T-cell (primary cell): ENCODE measurements at regions of chr6 and their contacts with region 1.

Region 1: GRCh38 chr6:133973109-133973971 is 20.3 kb downstream of the TBPL1 start:
- DNase-seq: peak in 1 of 35 experiments; percentile 73
- ATAC-seq: peak; percentile 42 to 66 (median 55)
- H3K4me3 ChIP-seq: no peak overlapping the region
- H3K4me3 Mint-ChIP-seq: no peak overlapping the region
- H3K27ac ChIP-seq: no peak overlapping the region
- H3K27ac Mint-ChIP-seq: peak overlapping the region in 1 of 2 donors; percentile 52
- H3K4me1 ChIP-seq: peaks cover 2 to 5% of the 10 kb centered on the region in 2 experiments
- H3K4me1 Mint-ChIP-seq: peaks cover 50 to 64% (median 58%) of the 10 kb centered on the region in 3 donors
- H3K27me3 ChIP-seq: no peaks in the 10 kb centered on the region
- H3K27me3 Mint-ChIP-seq: no peaks in the 10 kb centered on the region

Region 2: DNA sequence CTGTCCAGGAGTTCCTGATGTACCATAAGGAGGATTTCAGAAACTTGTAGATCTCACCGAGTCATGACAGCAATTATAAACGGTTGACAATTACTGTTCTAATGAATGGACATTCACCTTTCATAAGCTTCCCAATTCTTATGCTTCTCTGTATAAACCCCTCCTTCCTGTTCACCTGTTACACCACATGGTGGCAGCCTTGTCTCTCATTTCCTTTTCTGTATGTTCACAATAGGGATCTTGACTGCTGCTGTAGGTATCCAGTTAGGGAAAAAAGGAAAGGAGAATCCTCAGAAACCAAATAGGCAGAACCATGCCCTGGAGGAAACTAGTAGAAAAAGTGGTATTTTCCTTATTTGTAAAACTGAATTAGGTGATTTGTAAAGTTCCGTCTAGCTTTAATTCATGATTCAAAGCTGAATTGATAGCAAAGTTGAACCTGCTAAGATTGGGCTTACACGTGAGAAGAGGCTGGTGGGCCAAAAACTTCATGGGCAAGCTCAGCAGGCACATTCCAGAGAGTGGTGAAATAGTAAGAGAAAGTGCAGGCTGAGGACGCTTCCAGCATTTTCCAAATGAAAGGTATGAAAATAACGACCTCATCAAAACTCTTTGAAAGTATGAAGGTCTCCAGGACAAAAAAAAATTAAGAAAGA is 49.3 kb before region 1 on chr6:
- CTCF ChIA-PET with region 1: interaction called, 8 to 16 read pairs
- POLR2A ChIA-PET with region 1: no interaction called
- DNase-seq: peak in 33 of 35 experiments; percentile 8 to 82 (median 42)
- ATAC-seq: peak; percentile 80 to 89 (median 86)
- H3K4me3 ChIP-seq: no peak overlapping the region
- H3K4me3 Mint-ChIP-seq: no peak overlapping the region
- H3K27ac ChIP-seq: no peak overlapping the region
- H3K27ac Mint-ChIP-seq: no peak overlapping the region
- H3K4me1 ChIP-seq: no peaks in the 10 kb centered on the region
- H3K4me1 Mint-ChIP-seq: no peaks in the 10 kb centered on the region
- H3K27me3 ChIP-seq: peaks cover 6 to 19% of the 10 kb centered on the region in 2 experiments
- H3K27me3 Mint-ChIP-seq: peaks cover 20 to 40% of the 10 kb centered on the region in 2 donors

Region 3: GRCh38 chr6:133959667-133960368 is 13.5 kb before region 1 on chr6:
- CTCF ChIA-PET with region 1: interaction called, 12 to 25 read pairs
- POLR2A ChIA-PET with region 1: interaction called in 1 of 2 experiments, 3 read pairs
- DNase-seq: no peak
- ATAC-seq: no peak
- H3K4me3 ChIP-seq: no peak overlapping the region
- H3K4me3 Mint-ChIP-seq: peak overlapping the region in 1 of 3 donors; percentile 14
- H3K27ac ChIP-seq: no peak overlapping the region
- H3K27ac Mint-ChIP-seq: peak overlapping the region in 1 of 2 donors; percentile 0
- H3K4me1 ChIP-seq: peaks cover 7 to 15% of the 10 kb centered on the region in 2 experiments
- H3K4me1 Mint-ChIP-seq: peaks cover 80 to 84% (median 82%) of the 10 kb centered on the region in 3 donors
- H3K27me3 ChIP-seq: no peaks in the 10 kb centered on the region
- H3K27me3 Mint-ChIP-seq: no peaks in the 10 kb centered on the region

Region 4: GRCh38 chr6:134063966-134064445 is 90.7 kb after region 1 on chr6:
- CTCF ChIA-PET with region 1: interaction called, 27 to 43 read pairs
- POLR2A ChIA-PET with region 1: interaction called in 1 of 2 experiments, 3 read pairs
- DNase-seq: peak in 34 of 35 experiments; percentile 10 to 74 (median 42)
- ATAC-seq: peak; percentile 88 to 90 (median 90)
- H3K4me3 ChIP-seq: no peak overlapping the region
- H3K4me3 Mint-ChIP-seq: no peak overlapping the region
- H3K27ac ChIP-seq: no peak overlapping the region
- H3K27ac Mint-ChIP-seq: no peak overlapping the region
- H3K4me1 ChIP-seq: no peaks in the 10 kb centered on the region
- H3K4me1 Mint-ChIP-seq: peaks cover 0 to 1% (median 0%) of the 10 kb centered on the region in 3 donors
- H3K27me3 ChIP-seq: no peaks in the 10 kb centered on the region
- H3K27me3 Mint-ChIP-seq: peaks cover 0 to 10% of the 10 kb centered on the region in 2 donors

Region 5: GRCh38 chr6:135183532-135184440 is 1210.4 kb after region 1 on chr6:
- CTCF ChIA-PET with region 1: interaction called in 1 of 2 experiments, 10 read pairs
- POLR2A ChIA-PET with region 1: no interaction called
- DNase-seq: peak; percentile 59 to 84 (median 71)
- ATAC-seq: peak; percentile 45 to 55 (median 48)
- H3K4me3 ChIP-seq: peak overlapping the region; percentile 63 to 98
- H3K4me3 Mint-ChIP-seq: peak overlapping the region; percentile 83 to 94 (median 87)
- H3K27ac ChIP-seq: peak overlapping the region; percentile 5
- H3K27ac Mint-ChIP-seq: peak overlapping the region; percentile 74 to 81
- H3K4me1 ChIP-seq: peaks cover 12 to 21% of the 10 kb centered on the region in 2 experiments
- H3K4me1 Mint-ChIP-seq: peaks cover 17 to 29% (median 25%) of the 10 kb centered on the region in 3 donors
- H3K27me3 ChIP-seq: no peaks in the 10 kb centered on the region
- H3K27me3 Mint-ChIP-seq: no peaks in the 10 kb centered on the region